Ovary (tissue), 10 donors: ENCODE measurements at regions of chr1 and their contacts with region 1.

Region 1: GRCh38 chr1:12275369-12275768 is 45.5 kb downstream of the VPS13D start:
- DNase-seq: peak; percentile 38 to 75 (median 62)
- H3K4me3 ChIP-seq: no peak overlapping the region
- H3K27ac ChIP-seq: no peak overlapping the region
- H3K4me1 ChIP-seq: no peaks in the 10 kb centered on the region
- H3K27me3 ChIP-seq: no peaks in the 10 kb centered on the region
- CTCF ChIP-seq: peak in 2 of 3 donors; percentile 37 to 60
- EP300 ChIP-seq: no peak
- POLR2A ChIP-seq: no peak

Region 2: GRCh38 chr1:11898831-11899467 is 376.4 kb before region 1 on chr1:
- intact Hi-C with region 1: no loop called
- DNase-seq: no peak
- H3K4me3 ChIP-seq: no peak overlapping the region
- H3K27ac ChIP-seq: no peak overlapping the region
- H3K4me1 ChIP-seq: no peaks in the 10 kb centered on the region
- H3K27me3 ChIP-seq: no peaks in the 10 kb centered on the region
- CTCF ChIP-seq: no peak
- EP300 ChIP-seq: no peak
- POLR2A ChIP-seq: no peak

Region 3: DNA sequence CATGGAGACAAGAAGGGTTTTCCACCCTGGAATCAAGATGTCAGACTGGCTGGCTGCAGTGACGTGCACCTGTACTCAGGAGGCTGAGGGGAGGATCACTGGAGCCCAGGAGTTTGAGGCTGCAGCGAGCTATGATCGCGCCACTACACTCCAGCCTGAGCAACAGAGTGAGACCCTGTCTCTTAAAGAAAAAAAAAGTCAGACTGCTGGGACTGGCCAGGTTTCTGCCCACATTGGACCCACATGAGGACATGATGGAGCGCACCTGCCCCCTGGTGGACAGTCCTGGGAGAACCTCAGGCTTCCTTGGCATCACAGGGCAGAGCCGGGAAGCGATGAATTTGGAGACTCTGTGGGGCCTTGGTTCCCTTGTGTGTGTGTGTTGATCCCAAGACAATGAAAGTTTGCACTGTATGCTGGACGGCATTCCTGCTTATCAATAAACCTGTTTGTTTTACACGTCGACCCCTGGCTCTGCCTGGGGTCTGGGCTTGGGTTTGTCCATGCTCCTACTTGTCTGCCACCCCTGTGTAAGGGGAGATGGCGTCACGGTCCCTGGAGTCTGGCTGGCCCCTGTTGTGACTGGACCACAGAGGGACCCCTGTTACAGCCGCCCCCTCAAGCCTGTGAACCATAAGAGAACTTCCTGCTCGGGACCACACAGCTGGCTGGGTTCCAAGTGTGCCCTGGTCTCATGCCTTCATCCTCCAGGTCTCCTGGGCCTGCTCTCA is 66.4 kb before region 1 on chr1:
- intact Hi-C with region 1: no loop called
- DNase-seq: peak; percentile 80 to 93 (median 91)
- H3K4me3 ChIP-seq: no peak overlapping the region
- H3K27ac ChIP-seq: no peak overlapping the region
- H3K4me1 ChIP-seq: peaks cover 3% of the 10 kb centered on the region
- H3K27me3 ChIP-seq: no peaks in the 10 kb centered on the region
- CTCF ChIP-seq: peak; percentile 86 to 97 (median 96)
- EP300 ChIP-seq: no peak
- POLR2A ChIP-seq: peak; percentile 29

Region 4: GRCh38 chr1:12407050-12407961 is 131.9 kb after region 1 on chr1:
- intact Hi-C with region 1: loop called in 1 of 4 experiments (anchors 10 kb)
- DNase-seq: peak in 1 of 5 donors; percentile 31
- H3K4me3 ChIP-seq: no peak overlapping the region
- H3K27ac ChIP-seq: no peak overlapping the region
- H3K4me1 ChIP-seq: peaks cover 5% of the 10 kb centered on the region
- H3K27me3 ChIP-seq: no peaks in the 10 kb centered on the region
- CTCF ChIP-seq: peak in 2 of 3 donors; percentile 9 to 47
- EP300 ChIP-seq: no peak
- POLR2A ChIP-seq: no peak